Activated B cell treated with CpG ODN at 0.5 μM for 24 hours (primary cell): ENCODE measurements at regions of chr3 and their contacts with region 1.

Region 1: GRCh38 chr3:48000212-48000611 is 16.0 kb downstream of the MAP4 start:
- DNase-seq: no peak
- ATAC-seq: no peak
- H3K4me3 Mint-ChIP-seq: no peak overlapping the region
- H3K27ac Mint-ChIP-seq: no peak overlapping the region
- H3K4me1 Mint-ChIP-seq: peaks cover 2% of the 10 kb centered on the region
- H3K27me3 Mint-ChIP-seq: no peaks in the 10 kb centered on the region
- CTCF ChIP-seq: no peak

Region 2: DNA sequence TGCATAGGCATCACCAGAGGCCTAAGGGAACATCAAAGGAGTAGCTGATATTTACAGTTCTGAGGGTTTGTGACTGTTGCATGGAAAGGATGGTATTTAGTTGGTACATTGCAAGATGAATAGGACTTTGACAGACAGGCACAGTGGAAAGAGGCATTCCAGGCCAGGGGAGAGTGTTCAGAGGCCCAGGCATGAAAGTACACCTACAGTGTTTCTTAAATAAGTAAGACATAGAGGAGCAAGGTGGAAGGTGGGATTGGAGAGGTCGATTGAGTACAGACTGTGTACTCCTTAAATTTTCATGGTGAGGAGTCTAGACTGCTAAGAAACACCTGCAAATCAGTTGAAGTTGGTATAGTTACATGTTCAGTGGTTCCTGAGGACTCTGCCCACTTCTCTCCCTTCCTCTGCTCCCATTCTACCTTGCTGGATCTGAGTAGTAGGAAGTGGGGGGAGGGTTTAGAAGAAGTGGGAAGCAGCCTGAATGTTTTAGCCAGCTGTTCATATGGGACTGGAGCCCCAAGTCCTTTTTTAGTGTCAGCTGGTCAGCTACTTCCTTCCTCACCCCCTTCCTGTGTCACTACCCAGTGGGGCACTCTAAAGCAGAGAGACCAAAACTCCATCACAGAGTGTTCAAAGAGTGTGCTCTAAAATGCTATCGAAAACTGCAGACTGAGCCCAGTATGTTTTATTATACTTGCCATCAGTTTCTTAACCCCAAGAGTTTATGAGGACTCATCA is 703.5 kb before region 1 on chr3:
- CTCF ChIA-PET with region 1: no interaction called
- POLR2A ChIA-PET with region 1: interaction called, 10 read pairs
- intact Hi-C with region 1: no loop called
- DNase-seq: no peak
- ATAC-seq: peak; percentile 15
- H3K4me3 Mint-ChIP-seq: peak overlapping the region; percentile 21
- H3K27ac Mint-ChIP-seq: peak overlapping the region; percentile 63
- H3K4me1 Mint-ChIP-seq: peaks cover 69% of the 10 kb centered on the region
- H3K27me3 Mint-ChIP-seq: no peaks in the 10 kb centered on the region
- CTCF ChIP-seq: no peak

Region 3: DNA sequence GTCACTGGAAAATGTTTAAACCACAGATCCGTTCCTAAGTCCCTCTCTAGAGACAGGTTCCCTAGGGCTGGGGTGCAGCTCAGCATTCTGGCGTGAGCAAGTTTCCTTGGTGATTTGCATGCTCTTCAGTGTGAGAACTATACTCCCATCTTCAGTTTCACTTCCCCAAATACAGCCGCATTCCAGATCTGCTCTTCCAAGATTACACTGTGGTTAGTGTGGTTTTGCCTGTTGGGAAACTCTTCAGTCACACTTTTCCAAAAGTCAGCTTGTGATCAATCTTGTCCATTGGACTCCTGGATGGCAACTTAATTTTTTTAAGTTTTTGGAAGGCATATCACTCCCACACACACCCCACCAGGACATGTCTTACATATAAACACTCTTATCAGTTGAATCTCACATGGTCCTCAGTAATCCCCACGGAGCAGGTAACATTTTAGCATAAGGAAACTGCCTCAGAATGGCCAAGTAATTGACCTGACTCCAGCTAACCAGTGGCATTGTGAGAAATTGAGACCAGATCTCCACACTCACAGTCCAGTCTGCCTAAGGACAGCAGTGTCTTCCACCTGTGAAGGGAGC is 652.9 kb before region 1 on chr3:
- CTCF ChIA-PET with region 1: no interaction called
- POLR2A ChIA-PET with region 1: no interaction called
- intact Hi-C with region 1: no loop called
- DNase-seq: no peak
- ATAC-seq: peak; percentile 89
- H3K4me3 Mint-ChIP-seq: peak overlapping the region; percentile 70
- H3K27ac Mint-ChIP-seq: peak overlapping the region; percentile 72
- H3K4me1 Mint-ChIP-seq: peaks cover 41% of the 10 kb centered on the region
- H3K27me3 Mint-ChIP-seq: no peaks in the 10 kb centered on the region
- CTCF ChIP-seq: no peak

Region 4: GRCh38 chr3:48400824-48401433 is 400.7 kb after region 1 on chr3:
- CTCF ChIA-PET with region 1: no interaction called
- POLR2A ChIA-PET with region 1: no interaction called
- intact Hi-C with region 1: no loop called
- DNase-seq: peak; percentile 24
- ATAC-seq: peak; percentile 94
- H3K4me3 Mint-ChIP-seq: no peak overlapping the region
- H3K27ac Mint-ChIP-seq: no peak overlapping the region
- H3K4me1 Mint-ChIP-seq: no peaks in the 10 kb centered on the region
- H3K27me3 Mint-ChIP-seq: peaks cover under 1% of the 10 kb centered on the region
- CTCF ChIP-seq: peak; percentile 41